Right cardiac atrium (tissue), 5 donors: ENCODE measurements at regions of chr18 and their contacts with region 1.

Region 1: GRCh38 chr18:76803814-76804213 is 18.5 kb upstream of the ZNF236 start:
- DNase-seq: peak; percentile 42 to 78 (median 62)
- ATAC-seq: peak; percentile 67 to 68
- H3K4me3 ChIP-seq: no peak overlapping the region
- H3K27ac ChIP-seq: no peak overlapping the region
- H3K4me1 ChIP-seq: no peaks in the 10 kb centered on the region
- H3K27me3 ChIP-seq: no peaks in the 10 kb centered on the region

Region 2: GRCh38 chr18:76495435-76496199 is 308.2 kb before region 1 on chr18:
- intact Hi-C with region 1: no loop called
- DNase-seq: peak in 2 of 3 donors; percentile 46 to 63
- ATAC-seq: peak; percentile 32 to 51
- H3K4me3 ChIP-seq: peak overlapping the region; percentile 100
- H3K27ac ChIP-seq: peak overlapping the region; percentile 64
- H3K4me1 ChIP-seq: no peaks in the 10 kb centered on the region
- H3K27me3 ChIP-seq: no peaks in the 10 kb centered on the region

Region 3: DNA sequence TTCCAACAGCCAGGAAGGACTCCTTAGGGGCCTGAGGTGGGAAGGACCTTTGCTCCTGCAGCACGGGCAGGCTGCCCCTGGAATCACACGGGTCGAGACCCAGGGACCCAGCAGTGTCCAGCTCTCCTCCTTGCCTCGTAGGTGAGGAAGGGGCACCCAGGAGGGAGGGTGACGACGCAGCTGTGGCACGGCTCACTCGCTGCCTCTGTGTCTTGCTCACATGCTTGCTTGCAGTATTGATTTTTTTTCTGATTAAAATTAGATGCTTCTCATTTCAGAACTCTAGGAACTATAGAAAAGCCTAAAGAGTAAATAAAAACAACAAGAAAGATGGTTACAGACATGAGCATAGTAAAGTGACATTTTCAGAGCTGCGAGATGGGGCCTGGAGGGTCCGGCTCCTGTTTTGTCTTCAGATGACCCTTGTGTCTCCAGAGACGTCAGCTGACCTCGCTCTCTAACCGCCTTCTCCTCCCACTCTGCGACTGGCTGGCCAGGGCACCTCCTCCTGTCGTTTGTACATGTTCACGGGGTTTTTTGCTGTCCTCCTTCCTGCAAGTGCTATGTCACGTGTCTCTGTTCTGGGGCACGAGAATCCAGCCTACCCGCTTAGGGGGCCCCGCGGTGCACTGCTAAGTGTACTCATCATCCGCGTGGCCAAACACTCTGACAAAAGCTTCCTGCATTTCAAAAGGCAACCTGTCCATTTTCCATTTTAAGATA is 47.1 kb before region 1 on chr18:
- intact Hi-C with region 1: no loop called
- DNase-seq: no peak
- ATAC-seq: no peak
- H3K4me3 ChIP-seq: no peak overlapping the region
- H3K27ac ChIP-seq: no peak overlapping the region
- H3K4me1 ChIP-seq: no peaks in the 10 kb centered on the region
- H3K27me3 ChIP-seq: no peaks in the 10 kb centered on the region

Region 4: DNA sequence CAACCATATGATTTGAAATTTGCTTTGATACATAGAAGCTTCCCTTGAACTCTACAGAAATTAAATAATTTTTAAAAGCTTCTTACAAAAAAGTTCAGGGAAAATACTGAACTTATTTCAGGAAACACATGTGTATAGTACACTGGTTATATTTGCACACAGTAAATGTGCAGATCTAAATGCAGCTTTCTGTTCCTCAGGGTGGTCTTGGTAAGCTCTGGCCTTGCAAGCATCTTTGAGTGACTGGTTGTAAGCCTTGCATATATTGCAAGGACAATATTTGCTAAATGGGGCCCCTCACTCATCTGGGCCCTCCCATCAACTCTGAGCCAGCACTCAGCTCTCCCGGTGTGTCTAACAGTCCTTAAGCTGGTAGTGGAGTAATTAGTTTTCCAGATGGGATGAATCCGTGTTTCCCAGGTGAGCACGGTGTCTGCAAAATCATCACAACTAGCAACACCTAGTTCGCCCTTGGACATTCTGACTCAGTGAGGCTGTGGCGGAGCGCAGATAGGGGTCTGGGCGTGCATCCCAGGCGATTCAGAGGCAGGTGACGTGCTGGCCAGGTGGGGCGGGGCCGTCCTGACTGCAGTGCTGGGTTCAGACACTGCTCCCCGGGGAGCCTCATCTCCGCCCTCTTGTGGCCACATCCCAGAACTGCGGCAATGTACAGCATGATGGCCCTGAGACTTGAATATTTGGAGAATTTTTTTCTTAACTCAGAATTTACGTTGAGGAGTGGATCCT is 179.2 kb after region 1 on chr18:
- intact Hi-C with region 1: loop called in 2 of 4 experiments (anchors 10 kb)
- DNase-seq: peak; percentile 76 to 92 (median 90)
- ATAC-seq: peak; percentile 67 to 77
- H3K4me3 ChIP-seq: no peak overlapping the region
- H3K27ac ChIP-seq: no peak overlapping the region
- H3K4me1 ChIP-seq: no peaks in the 10 kb centered on the region
- H3K27me3 ChIP-seq: no peaks in the 10 kb centered on the region